Endothelial cell of umbilical vein (primary cell): ENCODE measurements at regions of chr13 and their contacts with region 1.

Region 1: GRCh38 chr13:98842864-98843481 is 90.5 kb upstream of the SLC15A1 start:
- DNase-seq: peak; percentile 77
- H3K4me3 ChIP-seq: no peak overlapping the region
- H3K27ac ChIP-seq: no peak overlapping the region
- H3K4me1 ChIP-seq: peaks cover 6% of the 10 kb centered on the region
- H3K27me3 ChIP-seq: no peaks in the 10 kb centered on the region
- CTCF ChIP-seq: peak; percentile 79 to 85
- POLR2A ChIP-seq: no peak

Region 2: GRCh38 chr13:98826146-98826545 is 16.8 kb before region 1 on chr13:
- CTCF ChIA-PET with region 1: interaction called, 21 read pairs
- POLR2A ChIA-PET with region 1: no interaction called
- dilution Hi-C with region 1: no loop called
- intact Hi-C with region 1: no loop called
- DNase-seq: no peak
- H3K4me3 ChIP-seq: no peak overlapping the region
- H3K27ac ChIP-seq: no peak overlapping the region
- H3K4me1 ChIP-seq: peaks cover 37% of the 10 kb centered on the region
- H3K27me3 ChIP-seq: no peaks in the 10 kb centered on the region
- CTCF ChIP-seq: no peak
- POLR2A ChIP-seq: no peak

Region 3: DNA sequence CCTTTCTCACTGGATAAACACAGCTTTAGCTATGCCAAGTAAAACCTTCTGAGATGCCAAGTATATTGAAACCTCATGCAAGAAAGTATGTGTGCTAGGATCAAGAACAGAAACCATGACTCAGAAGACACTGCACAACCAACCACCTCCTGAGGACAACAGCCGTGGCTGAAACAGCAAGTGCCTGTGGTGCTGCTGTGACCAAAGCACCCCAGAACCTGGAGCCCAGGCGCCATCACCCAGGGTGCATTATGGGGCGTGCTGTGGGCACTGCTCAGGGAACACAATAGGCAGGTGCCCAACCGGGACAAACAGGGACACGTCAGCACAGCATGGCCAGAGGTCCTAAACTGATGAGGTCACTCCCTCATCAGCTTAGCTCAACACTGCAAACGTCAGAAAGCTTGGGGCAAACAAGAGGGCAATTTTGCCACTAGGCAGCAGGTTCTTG is 10.8 kb after region 1 on chr13:
- CTCF ChIA-PET with region 1: interaction called, 31 read pairs
- POLR2A ChIA-PET with region 1: no interaction called
- dilution Hi-C with region 1: no loop called
- intact Hi-C with region 1: no loop called
- DNase-seq: no peak
- H3K4me3 ChIP-seq: no peak overlapping the region
- H3K27ac ChIP-seq: no peak overlapping the region
- H3K4me1 ChIP-seq: peaks cover 31% of the 10 kb centered on the region
- H3K27me3 ChIP-seq: no peaks in the 10 kb centered on the region
- CTCF ChIP-seq: no peak
- POLR2A ChIP-seq: no peak

Region 4: GRCh38 chr13:98869408-98870090 is 26.6 kb after region 1 on chr13:
- CTCF ChIA-PET with region 1: interaction called, 14 read pairs
- POLR2A ChIA-PET with region 1: no interaction called
- dilution Hi-C with region 1: no loop called
- intact Hi-C with region 1: no loop called
- DNase-seq: peak; percentile 79
- H3K4me3 ChIP-seq: no peak overlapping the region
- H3K27ac ChIP-seq: no peak overlapping the region
- H3K4me1 ChIP-seq: no peaks in the 10 kb centered on the region
- H3K27me3 ChIP-seq: no peaks in the 10 kb centered on the region
- CTCF ChIP-seq: peak in 1 of 2 donors; percentile 14
- POLR2A ChIP-seq: no peak